ENCODE measurements at regions of chr19 and their contacts with region 1.

Region 1: DNA sequence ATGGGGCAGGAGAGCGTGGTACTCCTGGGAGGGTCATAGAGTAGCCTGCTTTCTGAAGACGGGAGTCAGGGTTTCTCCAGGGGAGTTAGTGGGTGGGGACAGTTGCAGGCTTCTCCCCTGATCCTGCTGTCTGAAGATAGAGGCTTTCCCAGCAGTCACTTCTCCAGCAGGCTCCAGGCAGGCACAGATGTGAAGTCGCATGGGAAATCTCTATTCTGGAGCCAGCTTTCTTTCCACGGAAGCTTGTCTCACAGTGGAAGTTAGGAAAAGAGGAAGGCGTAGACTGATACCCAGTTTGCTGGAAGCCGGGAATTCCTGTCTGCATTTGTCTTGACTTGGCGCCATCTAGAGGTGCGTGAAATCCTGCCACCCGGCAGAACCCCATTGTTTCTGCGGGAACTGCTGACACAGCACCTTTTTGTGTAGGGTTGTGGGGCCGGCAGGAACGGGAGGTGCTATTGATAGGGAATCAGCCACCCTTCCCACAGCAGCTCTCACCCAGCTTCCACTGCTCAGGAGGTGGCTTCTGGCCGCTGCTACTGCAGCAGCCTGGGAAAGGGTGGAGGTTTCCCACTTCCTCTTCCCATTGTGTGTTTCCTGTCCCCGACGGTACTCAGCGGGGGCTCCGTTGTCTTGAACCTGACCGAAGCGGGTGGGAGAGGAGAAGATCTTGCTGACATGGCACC is 28.5 kb upstream of the NPAS1 start:
- DNase-seq: peak; percentile 86
- H3K4me3 ChIP-seq: no peak overlapping the region
- H3K27ac ChIP-seq: no peak overlapping the region
- H3K4me1 ChIP-seq: no peaks in the 10 kb centered on the region
- H3K27me3 ChIP-seq: no peaks in the 10 kb centered on the region
- CTCF ChIP-seq: peak; percentile 89

Region 2: GRCh38 chr19:46753420-46754155 is 237.5 kb before region 1 on chr19:
- intact Hi-C with region 1: loop called (anchors 10 kb)
- DNase-seq: peak; percentile 76
- H3K4me3 ChIP-seq: no peak overlapping the region
- H3K27ac ChIP-seq: no peak overlapping the region
- H3K4me1 ChIP-seq: no peaks in the 10 kb centered on the region
- H3K27me3 ChIP-seq: no peaks in the 10 kb centered on the region
- CTCF ChIP-seq: peak; percentile 27

Region 3: DNA sequence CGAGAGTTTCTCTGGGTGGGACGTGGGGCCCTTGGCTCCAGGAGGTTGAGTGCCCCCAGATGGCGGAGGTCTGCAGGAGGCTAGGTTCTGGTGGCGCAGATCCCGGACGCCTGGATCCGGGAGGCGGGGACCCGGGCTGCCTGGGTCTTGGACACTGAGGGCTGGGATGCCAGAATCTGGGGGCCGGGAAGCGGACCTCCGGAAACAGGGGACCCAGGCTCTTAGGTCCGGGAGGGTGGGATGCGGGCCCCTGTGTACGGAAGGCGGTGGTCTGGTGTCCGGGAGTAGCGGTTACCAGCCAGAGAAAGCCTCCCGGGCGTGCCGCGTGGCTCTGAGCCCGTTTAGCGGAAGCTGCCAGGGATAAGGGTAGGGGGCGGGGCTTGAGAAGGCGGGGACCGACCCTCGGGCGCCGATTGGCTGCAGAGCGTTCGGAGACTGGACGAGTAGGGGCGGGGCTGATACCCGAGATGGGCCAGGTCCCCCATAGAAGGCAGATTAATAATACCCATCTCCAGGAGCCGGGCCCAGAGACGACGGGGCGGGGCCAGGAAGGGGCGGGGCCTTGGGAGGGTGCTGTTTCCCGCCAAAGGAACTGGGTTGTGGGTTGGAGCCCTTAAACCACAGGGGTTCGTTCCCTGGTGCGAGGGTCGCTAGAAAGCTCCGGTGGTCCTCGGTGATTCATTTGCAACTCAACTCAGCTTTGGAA is 202.7 kb before region 1 on chr19 and contains the start of gene SLC1A5:
- intact Hi-C with region 1: no loop called
- DNase-seq: peak; percentile 99
- H3K4me3 ChIP-seq: peak within 1 kb of the TSS; percentile 84
- H3K27ac ChIP-seq: peak within 1 kb of the TSS; percentile 95
- H3K4me1 ChIP-seq: peaks cover 13% of the 10 kb centered on the region
- H3K27me3 ChIP-seq: no peaks in the 10 kb centered on the region
- CTCF ChIP-seq: no peak
- total RNA-seq, gene SLC1A5: 84.3 to 169 TPM

Region 4: GRCh38 chr19:46860125-46860845 is 130.8 kb before region 1 on chr19:
- intact Hi-C with region 1: loop called (anchors 2 kb)
- DNase-seq: peak; percentile 98
- H3K4me3 ChIP-seq: peak overlapping the region; percentile 90
- H3K27ac ChIP-seq: peak overlapping the region; percentile 96
- H3K4me1 ChIP-seq: peaks cover 12% of the 10 kb centered on the region
- H3K27me3 ChIP-seq: no peaks in the 10 kb centered on the region
- CTCF ChIP-seq: no peak

Measured in colonic mucosa (tissue), 4 donors.